ENCODE measurements at regions of chr13 and their contacts with region 1.

Region 1: GRCh38 chr13:49395451-49395865 is 48.4 kb downstream of the CAB39L start:
- DNase-seq: no peak
- ATAC-seq: no peak
- H3K4me3 Mint-ChIP-seq: no peak overlapping the region
- H3K27ac Mint-ChIP-seq: no peak overlapping the region
- H3K4me1 Mint-ChIP-seq: no peaks in the 10 kb centered on the region
- H3K27me3 Mint-ChIP-seq: no peaks in the 10 kb centered on the region
- CTCF ChIP-seq: no peak

Region 2: GRCh38 chr13:49348751-49349150 is 46.7 kb before region 1 on chr13:
- CTCF ChIA-PET with region 1: no interaction called
- POLR2A ChIA-PET with region 1: no interaction called
- intact Hi-C with region 1: loop called (anchors 10 kb)
- DNase-seq: no peak
- ATAC-seq: no peak
- H3K4me3 Mint-ChIP-seq: no peak overlapping the region
- H3K27ac Mint-ChIP-seq: no peak overlapping the region
- H3K4me1 Mint-ChIP-seq: no peaks in the 10 kb centered on the region
- H3K27me3 Mint-ChIP-seq: no peaks in the 10 kb centered on the region
- CTCF ChIP-seq: no peak

Measured in activated B cell treated with CpG ODN at 0.5 μM for 24 hours (primary cell).